ENCODE measurements at regions of chr17 and their contacts with region 1.

Region 1: DNA sequence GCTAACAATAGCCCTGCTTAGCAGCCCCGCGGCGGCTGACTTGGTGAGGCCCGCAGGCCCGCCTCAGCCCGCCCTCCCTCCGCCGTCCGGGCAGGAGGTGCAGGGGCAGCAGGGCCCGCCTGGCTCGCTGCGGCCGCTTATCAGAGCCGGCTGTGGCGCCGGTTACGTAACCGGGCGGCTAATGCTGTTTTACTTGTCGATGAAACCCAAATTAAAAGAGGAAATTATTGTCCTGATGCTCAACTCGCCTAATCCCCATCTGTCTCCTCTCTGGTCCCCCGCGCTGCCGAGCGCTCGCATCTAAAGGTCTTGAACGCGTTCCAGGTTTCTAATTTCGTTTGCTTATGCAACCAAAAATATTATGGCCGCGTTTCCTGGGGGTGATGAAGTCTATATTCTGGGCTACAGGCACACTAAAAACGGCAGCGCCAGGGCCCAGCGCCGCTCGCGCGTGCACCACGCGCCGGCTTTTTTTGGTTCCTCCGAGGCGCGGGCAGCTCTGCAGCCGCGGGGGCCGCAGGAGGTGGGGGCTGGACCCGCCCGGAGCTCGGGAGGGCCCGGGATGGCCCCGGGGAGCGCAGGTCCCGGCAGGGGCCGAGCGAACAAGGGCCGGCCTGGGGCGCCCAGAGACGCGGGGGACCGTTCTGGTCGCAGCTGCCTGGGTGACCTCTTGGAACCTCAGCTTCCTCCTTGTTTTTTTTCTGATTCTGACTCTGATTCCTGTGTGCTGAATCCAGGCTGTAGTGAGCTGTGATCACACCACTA is 65.2 kb upstream of the TOB1 start:
- DNase-seq: peak in 1 of 2 experiments; percentile 77
- H3K4me3 ChIP-seq: peak overlapping the region; percentile 36 to 70 (median 47)
- H3K27ac ChIP-seq: no peak overlapping the region
- H3K4me1 ChIP-seq: peaks cover 0 to 9% (median 6%) of the 10 kb centered on the region in 4 experiments
- H3K27me3 ChIP-seq: peaks cover 0 to 6% (median 5%) of the 10 kb centered on the region in 4 experiments; a peak in 4 of 7 replicates
- CTCF ChIP-seq: no peak
- EP300 ChIP-seq: no peak
- POLR2A ChIP-seq: peak in 1 of 2 experiments; percentile 16; a peak in 1 of 3 replicates
- RAD21 ChIP-seq: 0 out of 4 replicates have a peak, but pooled peaks of 1 of the 2 experiments have one; percentile 2

Region 2: GRCh38 chr17:50919321-50920085 is 11.8 kb before region 1 on chr17:
- CTCF ChIA-PET with region 1: interaction called, 4 read pairs
- POLR2A ChIA-PET with region 1: interaction called, 13 read pairs
- DNase-seq: peak in 1 of 2 experiments; percentile 82
- H3K4me3 ChIP-seq: no peak overlapping the region
- H3K27ac ChIP-seq: no peak overlapping the region; the same call in 1 of the 2 replicates
- H3K4me1 ChIP-seq: peaks cover 2 to 48% (median 34%) of the 10 kb centered on the region in 4 experiments
- H3K27me3 ChIP-seq: peaks cover 0 to 2% (median 0%) of the 10 kb centered on the region in 4 experiments; a peak in 2 of 7 replicates
- CTCF ChIP-seq: no peak
- EP300 ChIP-seq: no peak
- POLR2A ChIP-seq: no peak
- RAD21 ChIP-seq: no peak

Region 3: DNA sequence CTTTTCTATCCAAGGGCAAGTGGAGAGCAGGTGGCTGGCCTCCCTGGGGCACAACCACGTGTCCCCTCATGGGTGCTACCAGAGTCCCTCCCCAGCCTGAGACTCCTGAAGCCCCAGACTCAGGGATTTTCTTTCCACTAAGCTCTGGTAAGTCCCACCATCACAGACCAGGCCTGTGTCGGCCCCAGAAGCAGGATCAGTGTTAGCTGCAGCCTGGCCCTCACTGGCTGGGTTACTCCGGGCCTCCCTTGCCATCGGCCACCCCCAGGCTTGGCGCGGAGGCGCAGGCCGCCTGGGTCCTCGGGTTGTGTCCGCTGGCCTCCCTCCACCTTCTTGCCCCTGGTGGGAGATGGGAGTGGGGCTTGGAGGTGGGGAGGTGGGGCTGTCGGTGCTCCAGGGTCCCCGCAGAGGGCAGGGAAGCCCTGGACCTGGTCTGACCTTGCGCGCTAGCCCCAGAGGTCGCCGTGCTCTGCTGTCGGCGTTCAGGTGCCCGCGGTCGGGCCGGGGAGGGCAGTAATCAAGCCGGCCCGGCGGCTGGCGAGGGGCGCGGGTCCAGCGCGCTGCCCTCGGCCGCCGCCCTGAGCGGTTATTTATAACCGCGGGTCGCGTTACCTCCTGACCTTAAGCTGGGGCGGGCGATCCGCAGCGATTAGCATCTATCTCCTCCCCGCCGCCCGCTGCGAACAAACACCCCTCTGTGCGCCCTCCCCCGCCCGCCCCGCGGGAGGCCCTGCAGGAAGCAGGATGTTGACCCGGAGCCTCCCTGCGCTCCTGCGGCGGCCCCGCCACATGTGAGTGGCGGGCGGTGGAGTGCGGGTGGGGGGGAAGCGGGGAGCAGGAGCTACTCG is 13.0 kb after region 1 on chr17:
- CTCF ChIA-PET with region 1: interaction called, 8 read pairs
- POLR2A ChIA-PET with region 1: interaction called, 13 read pairs
- DNase-seq: peak in 1 of 2 experiments; percentile 75
- H3K4me3 ChIP-seq: peak overlapping the region; percentile 0 to 56 (median 18); a peak in 5 of 8 replicates
- H3K27ac ChIP-seq: no peak overlapping the region
- H3K4me1 ChIP-seq: peaks cover 0 to 14% (median 12%) of the 10 kb centered on the region in 4 experiments; a peak in 5 of 7 replicates
- H3K27me3 ChIP-seq: peaks cover 0 to 6% (median 1%) of the 10 kb centered on the region in 4 experiments; a peak in 2 of 7 replicates
- CTCF ChIP-seq: no peak
- EP300 ChIP-seq: no peak
- POLR2A ChIP-seq: no peak
- RAD21 ChIP-seq: no peak

Region 4: GRCh38 chr17:50949989-50950881 is 18.9 kb after region 1 on chr17:
- CTCF ChIA-PET with region 1: interaction called, 10 read pairs
- POLR2A ChIA-PET with region 1: interaction called, 13 read pairs
- DNase-seq: peak in 1 of 2 experiments; percentile 86
- H3K4me3 ChIP-seq: no peak overlapping the region; a peak in 1 of 8 replicates
- H3K27ac ChIP-seq: no peak overlapping the region; the same call in 1 of the 2 replicates
- H3K4me1 ChIP-seq: peaks cover 3 to 32% (median 23%) of the 10 kb centered on the region in 4 experiments
- H3K27me3 ChIP-seq: no peaks in the 10 kb centered on the region
- CTCF ChIP-seq: peak; percentile 88 to 95 (median 90)
- EP300 ChIP-seq: no peak
- POLR2A ChIP-seq: no peak
- RAD21 ChIP-seq: peak; percentile 99 to 100

Measured in H1 (cell line).